ENCODE measurements at regions of chr2 and their contacts with region 1.

Region 1: GRCh38 chr2:74037379-74037860 is 52.7 kb downstream of the TET3 start:
- DNase-seq: no peak
- H3K4me3 ChIP-seq: no peak overlapping the region
- H3K27ac ChIP-seq: no peak overlapping the region
- H3K4me1 ChIP-seq: no peaks in the 10 kb centered on the region
- H3K27me3 ChIP-seq: no peaks in the 10 kb centered on the region
- CTCF ChIP-seq: no peak
- POLR2A ChIP-seq: no peak

Region 2: GRCh38 chr2:72963423-72964145 is 1073.8 kb before region 1 on chr2:
- intact Hi-C with region 1: loop called (anchors 5 kb)
- DNase-seq: no peak
- H3K4me3 ChIP-seq: no peak overlapping the region
- H3K27ac ChIP-seq: no peak overlapping the region
- H3K4me1 ChIP-seq: no peaks in the 10 kb centered on the region
- H3K27me3 ChIP-seq: no peaks in the 10 kb centered on the region
- CTCF ChIP-seq: no peak
- POLR2A ChIP-seq: no peak

Region 3: DNA sequence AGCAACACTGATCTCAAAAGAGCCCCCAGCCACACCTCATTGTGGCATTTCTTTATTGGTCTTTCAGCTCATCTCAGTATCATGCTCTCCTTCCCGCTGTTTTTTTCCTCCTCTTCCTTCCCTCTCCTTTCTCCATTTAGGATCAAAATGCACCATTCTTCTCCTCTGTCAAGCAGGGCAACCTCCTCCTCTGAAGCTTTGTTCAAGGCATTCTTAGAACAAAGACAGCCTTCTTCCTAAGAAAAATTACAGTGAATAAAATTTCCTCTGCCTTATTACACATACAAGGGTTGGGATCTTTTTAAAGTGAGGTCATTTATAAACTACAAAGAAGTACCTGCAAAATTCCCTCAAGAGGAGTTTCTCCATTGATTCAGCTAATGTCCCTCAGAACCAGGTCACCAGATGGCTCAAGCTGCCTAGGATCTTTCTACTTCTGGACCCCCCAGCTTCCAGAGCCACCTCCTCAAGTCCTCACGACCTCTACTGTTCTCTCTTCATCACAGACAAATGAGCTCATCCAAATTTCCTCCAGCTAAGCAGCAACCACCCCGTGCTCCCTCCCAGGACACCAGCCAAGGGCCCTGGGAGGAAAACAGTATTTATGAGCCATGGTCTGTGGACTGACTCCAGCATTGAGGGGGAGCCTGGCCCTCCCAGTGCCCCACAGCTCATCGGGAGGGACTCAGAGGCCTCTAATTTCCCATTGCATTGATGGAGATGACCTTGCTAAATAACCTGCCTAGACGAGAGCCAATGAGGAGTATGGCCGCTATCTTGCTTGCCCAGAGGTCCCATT is 983.9 kb before region 1 on chr2:
- intact Hi-C with region 1: no loop called
- DNase-seq: no peak
- H3K4me3 ChIP-seq: no peak overlapping the region
- H3K27ac ChIP-seq: no peak overlapping the region
- H3K4me1 ChIP-seq: no peaks in the 10 kb centered on the region
- H3K27me3 ChIP-seq: no peaks in the 10 kb centered on the region
- CTCF ChIP-seq: no peak
- POLR2A ChIP-seq: no peak

Region 4: DNA sequence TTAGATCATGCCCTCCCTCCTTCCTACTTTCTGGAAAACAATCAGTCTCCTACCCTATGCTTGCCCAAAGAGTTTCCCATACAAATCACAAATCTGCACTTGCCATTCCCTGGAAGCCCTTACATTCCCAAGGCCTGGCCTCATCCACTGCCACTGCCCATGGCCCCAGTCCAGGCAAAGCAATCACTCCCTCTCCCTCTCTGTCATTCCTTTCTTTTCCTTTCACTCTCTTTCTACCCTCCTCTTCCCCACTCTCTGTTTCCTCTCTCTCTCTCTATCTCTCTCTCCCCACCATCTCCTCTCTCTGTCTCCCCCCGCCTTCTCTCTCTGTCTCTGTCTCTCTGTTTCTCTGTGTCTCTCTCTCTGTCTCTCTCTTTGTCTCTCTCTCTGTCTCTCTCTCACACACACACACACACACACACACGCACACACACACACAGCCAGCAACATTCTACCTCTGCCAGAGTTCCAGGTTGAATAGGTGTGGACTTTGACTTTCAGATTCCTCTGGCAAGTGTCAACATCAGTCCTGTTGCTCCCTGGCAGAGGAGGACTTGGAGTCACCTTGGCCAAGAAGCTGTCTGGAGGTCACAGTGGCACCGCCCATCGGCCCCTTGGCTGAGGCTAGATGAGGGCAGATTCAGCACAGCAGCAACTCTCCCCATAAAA is 351.5 kb before region 1 on chr2:
- intact Hi-C with region 1: loop called (anchors 10 kb)
- DNase-seq: no peak
- H3K4me3 ChIP-seq: no peak overlapping the region
- H3K27ac ChIP-seq: no peak overlapping the region
- H3K4me1 ChIP-seq: no peaks in the 10 kb centered on the region
- H3K27me3 ChIP-seq: no peaks in the 10 kb centered on the region
- CTCF ChIP-seq: no peak
- POLR2A ChIP-seq: no peak

Region 5: DNA sequence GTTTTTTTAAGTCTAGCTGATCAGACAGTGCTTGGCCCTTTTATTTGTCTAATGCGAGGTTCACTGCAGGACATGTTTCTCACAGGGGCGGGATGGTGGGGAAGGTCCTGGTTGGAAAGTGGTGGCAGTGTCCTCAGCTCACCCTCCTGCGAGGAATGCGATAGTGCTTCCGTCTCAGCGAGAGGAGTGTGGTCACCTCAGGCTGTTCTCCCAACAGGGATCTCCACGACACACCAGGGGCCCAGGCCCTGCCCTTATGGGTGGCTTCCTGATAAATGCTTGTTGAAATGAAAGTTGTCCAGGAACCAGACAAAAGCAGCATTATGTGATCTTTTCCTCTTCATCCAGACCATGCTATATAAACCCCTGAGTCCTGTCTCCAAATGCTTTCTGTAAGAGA is 40.2 kb after region 1 on chr2:
- intact Hi-C with region 1: no loop called
- DNase-seq: no peak
- H3K4me3 ChIP-seq: no peak overlapping the region
- H3K27ac ChIP-seq: peak overlapping the region in 1 of 2 donors; percentile 11
- H3K4me1 ChIP-seq: no peaks in the 10 kb centered on the region
- H3K27me3 ChIP-seq: no peaks in the 10 kb centered on the region
- CTCF ChIP-seq: no peak
- POLR2A ChIP-seq: no peak